ENCODE measurements at regions of chr2 and their contacts with region 1.

Region 1: DNA sequence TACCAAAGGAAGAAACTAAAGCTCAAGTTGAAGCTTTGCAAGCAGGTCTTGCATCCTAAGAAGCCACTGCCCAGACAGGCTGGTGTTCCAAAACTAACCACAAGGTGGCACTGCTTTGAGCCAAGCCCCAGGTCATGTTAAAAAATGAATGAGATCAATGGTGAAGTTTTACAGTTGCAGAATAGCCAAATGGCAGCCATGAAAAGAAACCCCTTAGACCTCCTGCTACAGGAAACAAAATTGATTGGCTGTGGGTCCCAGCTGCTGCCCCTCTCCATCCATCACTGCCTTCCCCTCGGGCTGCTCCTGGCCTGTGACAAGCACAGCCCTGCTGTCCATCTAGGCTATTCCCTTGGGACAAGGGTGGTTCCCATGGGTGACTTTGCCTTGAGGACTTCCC is 20.7 kb upstream of the MREG start:
- DNase-seq: peak; percentile 84
- ATAC-seq: peak; percentile 66
- H3K4me3 ChIP-seq: no peak overlapping the region
- H3K27ac ChIP-seq: no peak overlapping the region
- H3K4me1 ChIP-seq: peaks cover 13% of the 10 kb centered on the region
- H3K27me3 ChIP-seq: no peaks in the 10 kb centered on the region
- CTCF ChIP-seq: peak; percentile 91

Region 2: DNA sequence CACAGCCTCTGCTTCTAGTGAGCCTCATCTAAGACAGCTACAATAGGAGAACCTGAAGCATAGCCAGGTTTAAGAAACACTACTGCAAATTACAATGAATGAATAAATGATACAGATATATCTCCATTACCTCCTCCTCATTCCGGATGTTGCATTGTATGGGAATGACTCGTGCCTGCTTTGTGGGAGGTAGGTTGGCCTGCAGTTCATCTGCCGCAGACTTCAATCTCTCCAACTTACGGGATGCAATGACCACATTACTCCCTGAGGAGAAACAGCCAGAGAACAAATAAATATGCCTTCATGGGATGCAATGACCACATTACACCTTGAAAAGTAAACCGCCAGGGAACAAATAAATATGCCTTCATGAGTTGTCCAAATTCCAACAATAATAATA is 32.2 kb after region 1 on chr2:
- CTCF ChIA-PET with region 1: no interaction called
- POLR2A ChIA-PET with region 1: no interaction called
- intact Hi-C with region 1: loop called (anchors 5 kb)
- DNase-seq: peak; percentile 46
- ATAC-seq: no peak
- H3K4me3 ChIP-seq: no peak overlapping the region
- H3K27ac ChIP-seq: no peak overlapping the region
- H3K4me1 ChIP-seq: no peaks in the 10 kb centered on the region
- H3K27me3 ChIP-seq: no peaks in the 10 kb centered on the region
- CTCF ChIP-seq: no peak

Region 3: DNA sequence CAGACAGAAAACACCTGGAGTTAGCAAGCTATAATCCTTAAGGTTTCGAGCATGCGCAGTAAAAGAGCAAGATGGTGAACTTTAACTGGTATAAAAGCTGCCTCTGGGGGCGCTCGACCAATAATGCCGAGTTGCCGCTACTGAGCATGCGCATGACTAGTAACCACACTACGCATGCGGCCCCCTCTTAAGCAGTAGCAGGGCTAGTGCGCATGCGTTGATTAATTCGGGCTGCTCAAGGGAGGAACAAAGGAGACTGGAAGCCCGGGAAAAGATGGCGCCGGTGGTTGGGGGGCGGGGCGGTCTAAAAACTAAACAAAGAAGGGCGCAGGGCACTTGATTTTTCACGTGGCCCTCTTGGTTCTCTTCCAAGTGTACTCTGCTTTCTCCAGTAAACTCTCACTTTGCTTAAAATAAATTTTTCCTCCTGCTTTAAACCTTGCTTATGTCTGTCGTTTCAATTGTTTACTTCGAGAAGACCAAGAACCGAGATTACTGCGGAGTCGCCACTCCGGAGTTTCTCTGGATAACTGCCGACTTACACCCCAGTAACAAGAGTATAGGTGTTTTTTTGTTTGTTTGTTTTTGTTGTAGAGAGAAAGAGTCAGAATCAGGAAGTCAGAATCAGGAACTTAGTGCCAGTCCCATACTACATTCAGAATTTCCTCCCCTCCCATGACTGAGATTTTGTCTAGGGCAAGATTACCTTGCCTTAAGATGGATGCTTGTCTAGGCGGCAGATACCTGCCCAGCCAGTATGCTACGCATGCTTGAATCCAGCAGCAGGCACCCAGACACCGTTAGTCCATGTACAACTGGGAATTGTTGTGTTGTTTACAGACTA is 80.9 kb after region 1 on chr2:
- CTCF ChIA-PET with region 1: no interaction called
- POLR2A ChIA-PET with region 1: no interaction called
- intact Hi-C with region 1: loop called (anchors 2 kb)
- DNase-seq: peak; percentile 99
- ATAC-seq: peak; percentile 94
- H3K4me3 ChIP-seq: peak overlapping the region; percentile 72
- H3K27ac ChIP-seq: peak overlapping the region; percentile 76
- H3K4me1 ChIP-seq: peaks cover 39% of the 10 kb centered on the region
- H3K27me3 ChIP-seq: no peaks in the 10 kb centered on the region
- CTCF ChIP-seq: peak; percentile 90

Region 4: GRCh38 chr2:216235462-216235861 is 201.4 kb after region 1 on chr2:
- CTCF ChIA-PET with region 1: no interaction called
- POLR2A ChIA-PET with region 1: no interaction called
- intact Hi-C with region 1: no loop called
- DNase-seq: no peak
- ATAC-seq: no peak
- H3K4me3 ChIP-seq: no peak overlapping the region
- H3K27ac ChIP-seq: no peak overlapping the region
- H3K4me1 ChIP-seq: no peaks in the 10 kb centered on the region
- H3K27me3 ChIP-seq: no peaks in the 10 kb centered on the region
- CTCF ChIP-seq: no peak